ENCODE measurements at regions of chr2 and their contacts with region 1.

Region 1: DNA sequence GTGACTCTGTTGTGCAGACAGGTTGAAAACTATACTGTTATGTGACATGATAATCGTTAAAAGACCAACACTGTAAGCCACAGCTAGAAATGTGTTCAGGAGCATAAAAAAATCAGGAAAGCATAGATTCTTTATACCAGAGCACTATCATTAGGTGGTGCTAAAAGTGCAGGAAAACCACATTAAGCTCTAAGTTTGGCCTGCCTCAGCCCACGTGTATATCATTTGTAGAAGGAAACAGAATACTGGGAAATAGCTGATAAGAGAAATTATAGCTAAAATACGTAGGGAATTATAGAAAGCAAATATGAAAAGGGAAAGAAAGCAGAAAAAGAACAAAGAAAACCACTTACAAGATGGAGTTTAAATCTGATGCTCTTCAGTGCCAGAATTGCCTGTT is 26.5 kb upstream of the C2orf74 start:
- DNase-seq: no peak
- H3K4me3 ChIP-seq: no peak overlapping the region
- CTCF ChIP-seq: peak; percentile 39

Region 2: GRCh38 chr2:61125123-61125710 is 10.3 kb before region 1 on chr2:
- CTCF ChIA-PET with region 1: interaction called, 15 read pairs
- POLR2A ChIA-PET with region 1: no interaction called
- DNase-seq: no peak
- H3K4me3 ChIP-seq: no peak overlapping the region
- CTCF ChIP-seq: no peak

Region 3: DNA sequence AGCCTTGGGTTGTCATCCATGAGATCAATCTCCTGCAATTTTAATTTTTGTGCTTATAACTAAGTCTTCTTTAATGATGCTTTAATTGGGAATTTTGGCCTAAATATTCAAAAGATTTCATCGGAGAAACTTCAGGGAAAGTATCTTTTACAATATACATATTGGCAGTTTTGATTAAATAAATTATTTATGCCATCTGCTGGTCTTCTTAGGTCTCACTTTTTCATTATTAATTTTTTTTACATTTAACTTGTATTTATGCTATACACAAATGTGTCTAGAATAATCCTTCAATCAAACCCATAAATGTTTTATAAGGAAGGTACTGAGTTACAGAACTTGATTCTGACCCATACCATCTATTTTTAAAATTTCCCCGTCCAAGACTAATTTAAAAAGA is 497.7 kb after region 1 on chr2:
- CTCF ChIA-PET with region 1: interaction called, 14 read pairs
- POLR2A ChIA-PET with region 1: no interaction called
- DNase-seq: no peak
- H3K4me3 ChIP-seq: no peak overlapping the region
- CTCF ChIP-seq: no peak

Region 4: DNA sequence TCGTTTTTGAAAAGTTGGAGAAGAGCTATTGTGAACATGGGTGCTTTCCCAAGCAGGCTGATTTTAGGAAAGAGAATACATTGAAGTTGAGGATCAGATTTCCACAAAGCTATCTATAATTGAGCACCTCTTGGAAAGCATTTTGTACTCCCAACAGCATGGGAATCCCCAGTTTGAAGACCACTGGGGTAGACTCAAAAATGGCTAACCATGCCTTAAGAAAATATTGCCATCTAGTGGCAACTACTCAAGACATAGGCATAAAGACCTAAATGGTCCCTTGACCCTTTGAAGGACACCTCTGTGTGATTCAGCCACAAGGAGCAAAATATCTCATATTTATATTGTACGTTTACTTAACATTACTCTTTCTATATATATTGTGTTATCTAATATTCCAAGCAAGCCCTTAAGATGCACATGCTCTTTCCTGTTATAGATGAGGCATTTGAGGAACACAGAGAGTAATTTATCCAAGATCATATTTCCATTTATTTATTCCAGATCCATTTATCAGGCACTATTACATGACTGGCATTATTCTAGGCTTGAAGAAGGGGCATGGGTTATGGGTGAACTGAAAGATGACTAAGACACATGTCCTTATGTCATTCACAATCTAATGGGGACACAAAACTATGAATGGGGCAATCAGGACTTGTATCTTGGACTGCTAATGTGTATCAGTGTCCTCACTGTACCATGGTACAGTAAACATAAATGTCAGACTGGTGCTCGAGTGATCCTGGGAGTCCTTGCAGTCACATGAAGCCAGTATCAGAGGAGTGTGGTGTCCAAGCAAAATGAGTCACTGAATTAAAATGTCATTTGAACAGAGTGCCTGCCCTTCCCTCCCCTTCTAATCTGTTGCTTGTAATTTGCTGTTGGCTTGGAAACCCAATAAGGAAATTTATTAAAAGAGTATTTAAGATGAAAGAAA is 523.6 kb after region 1 on chr2:
- CTCF ChIA-PET with region 1: interaction called, 16 read pairs
- POLR2A ChIA-PET with region 1: no interaction called
- DNase-seq: no peak
- H3K4me3 ChIP-seq: no peak overlapping the region
- CTCF ChIP-seq: peak; percentile 32

Measured in AG04449 (cell line).